Endothelial cell of umbilical vein (primary cell): ENCODE measurements at regions of chr4 and their contacts with region 1.

Region 1: DNA sequence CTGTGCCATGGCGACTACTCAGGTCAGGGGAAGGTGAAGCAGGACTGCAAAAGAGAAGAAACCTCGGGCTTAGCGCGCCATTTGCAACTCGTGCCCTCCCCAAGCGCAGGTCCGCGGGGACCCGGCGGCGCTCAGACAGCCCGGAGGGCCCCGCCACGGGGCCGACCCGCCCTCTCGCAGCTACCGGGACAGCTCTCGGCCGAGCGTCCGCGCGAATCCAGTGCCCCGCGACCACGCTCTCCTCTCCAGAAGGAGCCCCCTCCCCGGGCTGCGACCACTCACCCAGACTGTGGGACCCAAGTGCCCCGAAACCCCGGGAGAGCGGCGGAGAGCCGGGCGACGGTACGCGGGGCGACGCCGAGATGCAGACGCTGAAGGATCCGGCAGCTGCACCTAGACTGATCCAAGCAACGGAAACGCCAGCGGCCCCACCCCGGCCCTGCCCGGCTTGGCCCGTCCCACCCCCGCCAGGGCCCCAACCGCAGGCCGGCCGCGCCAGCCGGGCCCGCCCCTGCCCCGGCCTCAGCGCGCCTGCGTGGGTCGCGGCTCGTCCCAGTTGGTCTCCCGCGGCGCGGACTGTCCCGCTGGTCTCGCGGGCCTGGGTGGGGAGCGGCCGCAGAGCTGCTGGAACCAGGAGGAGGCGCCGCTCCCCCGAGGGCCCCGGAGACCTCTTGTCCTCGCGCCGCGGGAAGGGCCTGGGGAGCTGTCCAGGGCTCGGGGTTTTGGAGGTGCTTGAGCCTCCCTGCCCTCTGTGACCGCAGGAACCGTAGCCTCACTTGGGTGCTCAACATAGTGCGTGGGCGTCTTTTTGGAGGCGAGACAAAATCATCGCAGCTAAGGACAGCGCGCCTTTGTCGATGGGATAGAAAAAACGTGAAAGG is at the start of gene ANXA5:
- DNase-seq: peak; percentile 88
- H3K4me3 ChIP-seq: peak within 1 kb of the TSS; percentile 53 to 86 (median 70)
- H3K27ac ChIP-seq: peak within 1 kb of the TSS; percentile 97
- H3K4me1 ChIP-seq: peaks cover 33% of the 10 kb centered on the region
- H3K27me3 ChIP-seq: no peaks in the 10 kb centered on the region
- CTCF ChIP-seq: peak; percentile 41 to 49
- POLR2A ChIP-seq: peak; percentile 93
- total RNA-seq, gene ANXA5: 528 and 529 TPM in 2 replicates

Region 2: GRCh38 chr4:121686255-121686654 is 10.6 kb before region 1 on chr4:
- CTCF ChIA-PET with region 1: interaction called, 10 read pairs
- POLR2A ChIA-PET with region 1: interaction called, 8 read pairs
- dilution Hi-C with region 1: no loop called
- intact Hi-C with region 1: no loop called
- DNase-seq: peak; percentile 57
- H3K4me3 ChIP-seq: no peak overlapping the region
- H3K27ac ChIP-seq: peak overlapping the region; percentile 40
- H3K4me1 ChIP-seq: peaks cover 41% of the 10 kb centered on the region
- H3K27me3 ChIP-seq: no peaks in the 10 kb centered on the region
- CTCF ChIP-seq: no peak
- POLR2A ChIP-seq: no peak

Region 3: DNA sequence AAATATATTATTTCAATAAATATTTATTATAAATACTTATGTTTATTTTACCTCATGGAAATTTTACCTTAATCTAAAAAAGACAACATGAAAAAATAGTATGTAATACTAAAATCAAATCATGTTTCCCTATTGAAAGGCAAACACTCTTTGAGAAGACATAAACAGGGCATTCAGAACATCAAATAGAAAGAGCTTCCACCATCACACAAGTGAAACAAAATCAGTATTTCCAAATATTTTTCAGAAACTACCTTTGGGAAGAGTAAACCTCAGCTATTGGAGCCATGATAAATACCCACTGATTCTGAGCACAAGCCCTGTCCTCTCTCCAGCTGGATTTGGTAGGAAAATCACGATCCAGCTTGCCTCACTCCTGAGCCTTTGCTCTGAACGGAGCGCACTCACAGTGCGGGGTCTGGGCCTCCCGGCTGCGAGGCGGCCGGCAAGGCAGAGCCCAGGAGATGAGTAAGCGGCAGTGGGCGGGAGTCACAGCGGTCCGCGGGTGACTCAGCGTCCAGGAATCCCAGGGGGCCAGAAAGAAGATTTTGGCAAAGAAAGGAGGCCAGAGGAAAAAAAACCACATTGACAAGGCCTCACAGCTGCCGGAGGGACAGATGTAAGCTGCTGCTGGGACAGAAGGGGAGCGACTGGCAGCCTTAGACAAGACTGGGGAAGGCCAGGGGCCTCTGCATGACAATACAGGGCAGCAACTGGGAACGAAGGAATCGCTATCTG is 14.6 kb after region 1 on chr4:
- CTCF ChIA-PET with region 1: interaction called, 31 read pairs
- POLR2A ChIA-PET with region 1: interaction called, 18 read pairs
- dilution Hi-C with region 1: no loop called
- intact Hi-C with region 1: loop called (anchors 1 kb)
- DNase-seq: peak; percentile 90
- H3K4me3 ChIP-seq: peak overlapping the region in 1 of 3 experiments; percentile 76
- H3K27ac ChIP-seq: peak overlapping the region; percentile 98
- H3K4me1 ChIP-seq: peaks cover 27% of the 10 kb centered on the region
- H3K27me3 ChIP-seq: no peaks in the 10 kb centered on the region
- CTCF ChIP-seq: no peak
- POLR2A ChIP-seq: peak; percentile 87

Region 4: GRCh38 chr4:121800961-121801714 is 104.3 kb after region 1 on chr4 and contains the start of gene EXOSC9:
- CTCF ChIA-PET with region 1: no interaction called
- POLR2A ChIA-PET with region 1: no interaction called
- dilution Hi-C with region 1: no loop called
- intact Hi-C with region 1: loop called (anchors 1 kb)
- DNase-seq: peak; percentile 96
- H3K4me3 ChIP-seq: peak within 1 kb of the TSS; percentile 84 to 93 (median 84)
- H3K27ac ChIP-seq: peak within 1 kb of the TSS; percentile 80
- H3K4me1 ChIP-seq: peaks cover 11% of the 10 kb centered on the region
- H3K27me3 ChIP-seq: no peaks in the 10 kb centered on the region
- CTCF ChIP-seq: no peak
- POLR2A ChIP-seq: peak; percentile 91
- total RNA-seq, gene EXOSC9: 46.3 and 47.2 TPM in 2 replicates